ENCODE measurements at regions of chr22 and their contacts with region 1.

Region 1: DNA sequence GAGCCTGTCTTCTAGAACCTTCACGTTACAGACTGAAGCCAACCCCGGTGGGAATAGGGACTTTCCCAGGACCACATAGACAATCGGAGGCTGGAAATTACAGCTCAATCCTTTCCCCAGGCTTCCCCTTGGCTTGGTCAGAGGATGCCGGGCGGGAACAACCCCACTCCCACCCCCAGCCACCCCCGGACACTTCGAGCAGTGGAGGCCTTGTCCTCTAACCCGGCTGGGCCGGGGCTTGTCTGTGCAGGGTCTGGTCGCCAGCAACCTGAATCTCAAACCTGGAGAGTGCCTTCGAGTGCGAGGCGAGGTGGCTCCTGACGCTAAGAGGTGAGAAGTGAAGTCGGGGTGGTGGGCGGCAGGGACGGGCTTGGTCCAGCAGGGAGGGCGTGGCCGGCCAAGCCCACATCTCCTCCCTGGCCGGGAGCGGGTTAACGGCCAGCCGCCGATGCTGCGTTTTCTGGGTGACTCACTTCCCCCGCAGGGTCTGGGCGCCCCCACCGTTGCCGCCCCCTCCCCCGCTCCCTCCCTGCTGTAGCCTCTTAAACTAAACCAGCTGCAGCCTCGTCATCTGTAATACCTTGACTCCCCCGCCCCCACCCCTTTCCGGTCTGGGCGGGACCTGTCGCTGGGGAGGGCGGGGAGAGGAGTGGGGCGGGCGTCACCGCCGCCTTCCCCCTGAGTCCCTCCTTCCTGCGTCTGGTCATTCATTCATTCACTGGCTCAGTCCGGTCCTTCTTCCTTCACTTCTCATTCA is 1.5 kb downstream of the LGALS1 start:
- DNase-seq: peak; percentile 84 to 88
- H3K4me3 ChIP-seq: peak overlapping the region; percentile 53
- H3K4me3 Mint-ChIP-seq: peak overlapping the region; percentile 79
- H3K27ac Mint-ChIP-seq: peak overlapping the region; percentile 65
- H3K4me1 ChIP-seq: peaks cover 9% of the 10 kb centered on the region; the same call in 1 of the 2 replicates
- H3K4me1 Mint-ChIP-seq: peaks cover 7% of the 10 kb centered on the region
- H3K27me3 ChIP-seq: no peaks in the 10 kb centered on the region
- H3K27me3 Mint-ChIP-seq: no peaks in the 10 kb centered on the region
- CTCF ChIP-seq: no peak

Region 2: DNA sequence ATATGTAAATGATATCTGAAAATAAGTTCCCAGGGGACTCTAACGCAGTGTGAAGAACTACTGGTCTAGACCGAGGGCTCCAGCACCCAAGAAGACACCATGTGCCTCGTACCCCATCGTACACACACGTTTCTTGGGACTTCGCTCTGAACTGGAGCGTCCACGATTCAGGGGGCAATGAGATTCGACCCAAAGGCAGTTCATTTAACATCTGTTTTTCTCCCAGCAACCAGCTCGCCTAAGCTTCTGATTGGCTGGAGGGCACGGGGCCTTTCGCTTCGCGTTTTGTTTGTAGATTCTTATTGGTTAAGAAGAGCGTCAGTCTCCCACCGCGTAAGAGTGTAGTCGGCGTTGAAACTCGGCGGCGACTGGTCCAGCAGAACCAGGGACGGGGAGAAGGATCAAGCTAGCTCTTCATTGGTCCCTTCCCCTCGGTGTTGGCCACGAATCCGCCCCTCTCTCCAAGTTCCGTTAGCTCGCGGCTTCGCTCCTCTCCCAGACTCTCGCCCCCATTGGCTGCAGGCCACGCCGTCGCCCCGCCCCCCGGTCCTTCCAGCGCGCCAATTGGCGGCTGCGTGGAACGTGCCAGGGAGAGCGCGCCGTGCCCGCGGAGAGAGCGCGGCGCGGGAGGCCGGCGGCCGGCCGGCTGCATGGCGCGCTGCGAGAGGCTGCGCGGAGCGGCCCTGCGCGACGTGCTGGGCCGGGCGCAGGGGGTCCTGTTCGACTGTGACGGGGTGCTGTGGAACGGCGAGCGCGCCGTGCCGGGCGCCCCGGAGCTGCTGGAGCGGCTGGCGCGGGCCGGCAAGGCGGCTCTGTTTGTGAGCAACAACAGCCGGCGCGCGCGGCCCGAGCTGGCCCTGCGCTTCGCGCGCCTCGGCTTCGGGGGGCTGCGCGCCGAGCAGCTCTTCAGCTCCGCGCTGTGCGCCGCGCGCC is 18.5 kb before region 1 on chr22 and contains the start of gene PDXP:
- CTCF ChIA-PET with region 1: interaction called, 15 read pairs
- POLR2A ChIA-PET with region 1: no interaction called
- intact Hi-C with region 1: loop called (anchors 2 kb)
- DNase-seq: peak; percentile 98 to 99
- H3K4me3 ChIP-seq: peak within 1 kb of the TSS; percentile 98
- H3K4me3 Mint-ChIP-seq: peak within 1 kb of the TSS; percentile 89
- H3K27ac Mint-ChIP-seq: peak within 1 kb of the TSS; percentile 84
- H3K4me1 ChIP-seq: peaks cover 18% of the 10 kb centered on the region
- H3K4me1 Mint-ChIP-seq: peaks cover 19% of the 10 kb centered on the region
- H3K27me3 ChIP-seq: no peaks in the 10 kb centered on the region
- H3K27me3 Mint-ChIP-seq: no peaks in the 10 kb centered on the region
- CTCF ChIP-seq: no peak
- total RNA-seq, gene PDXP: 24.1 and 24.5 TPM in 2 replicates

Region 3: DNA sequence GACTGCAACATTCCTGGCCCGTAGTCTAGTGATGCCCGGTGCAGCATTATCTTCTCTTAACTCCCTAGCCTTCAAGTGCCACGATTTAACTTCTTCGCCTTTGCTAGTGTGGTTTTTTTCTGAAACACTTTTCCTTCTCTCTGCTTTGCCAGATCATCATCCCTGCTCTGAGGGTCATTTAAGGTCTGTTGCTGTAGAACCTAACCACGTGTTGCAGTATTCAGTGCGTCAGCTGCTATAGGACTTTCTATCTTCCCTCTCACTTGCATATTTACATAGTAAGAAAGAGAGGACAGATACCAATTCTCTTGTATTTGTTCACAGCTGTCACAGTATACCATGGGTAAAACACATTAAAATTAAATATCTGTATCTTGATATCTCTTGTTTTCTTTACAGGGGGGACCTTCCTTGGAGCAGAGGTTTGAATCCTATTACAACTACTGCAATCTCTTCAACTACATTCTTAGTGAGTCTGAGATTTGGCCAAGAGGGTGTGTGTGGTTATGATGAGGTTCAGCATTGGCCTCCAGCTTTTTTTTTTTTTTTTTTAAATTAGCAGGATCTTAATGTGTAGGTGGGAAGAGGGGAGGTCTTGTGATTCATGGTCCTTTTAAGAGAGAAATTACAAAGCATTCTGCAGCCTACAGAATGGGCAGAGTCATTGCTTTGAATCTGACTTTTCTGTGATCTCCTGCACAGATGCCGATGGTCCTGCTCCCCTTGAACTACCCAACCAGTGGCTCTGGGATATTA is 185.8 kb after region 1 on chr22:
- CTCF ChIA-PET with region 1: no interaction called
- POLR2A ChIA-PET with region 1: no interaction called
- intact Hi-C with region 1: no loop called
- DNase-seq: no peak
- H3K4me3 ChIP-seq: no peak overlapping the region
- H3K4me3 Mint-ChIP-seq: no peak overlapping the region
- H3K27ac Mint-ChIP-seq: no peak overlapping the region
- H3K4me1 ChIP-seq: no peaks in the 10 kb centered on the region
- H3K4me1 Mint-ChIP-seq: peaks cover 14% of the 10 kb centered on the region
- H3K27me3 ChIP-seq: no peaks in the 10 kb centered on the region
- H3K27me3 Mint-ChIP-seq: no peaks in the 10 kb centered on the region
- CTCF ChIP-seq: no peak